ENCODE measurements at regions of chr10 and their contacts with region 1.

Region 1: GRCh38 chr10:30591249-30591670 is 38.3 kb downstream of the LYZL2 start:
- DNase-seq: peak; percentile 64
- H3K4me3 ChIP-seq: no peak overlapping the region
- H3K27ac ChIP-seq: no peak overlapping the region
- H3K4me1 ChIP-seq: peaks cover 14% of the 10 kb centered on the region
- CTCF ChIP-seq: peak; percentile 97

Region 2: GRCh38 chr10:29998142-29998808 is 593.0 kb before region 1 on chr10:
- CTCF ChIA-PET with region 1: no interaction called
- POLR2A ChIA-PET with region 1: no interaction called
- intact Hi-C with region 1: loop called (anchors 10 kb)
- DNase-seq: peak; percentile 71
- H3K4me3 ChIP-seq: no peak overlapping the region
- H3K27ac ChIP-seq: no peak overlapping the region
- H3K4me1 ChIP-seq: no peaks in the 10 kb centered on the region
- CTCF ChIP-seq: peak; percentile 99

Region 3: DNA sequence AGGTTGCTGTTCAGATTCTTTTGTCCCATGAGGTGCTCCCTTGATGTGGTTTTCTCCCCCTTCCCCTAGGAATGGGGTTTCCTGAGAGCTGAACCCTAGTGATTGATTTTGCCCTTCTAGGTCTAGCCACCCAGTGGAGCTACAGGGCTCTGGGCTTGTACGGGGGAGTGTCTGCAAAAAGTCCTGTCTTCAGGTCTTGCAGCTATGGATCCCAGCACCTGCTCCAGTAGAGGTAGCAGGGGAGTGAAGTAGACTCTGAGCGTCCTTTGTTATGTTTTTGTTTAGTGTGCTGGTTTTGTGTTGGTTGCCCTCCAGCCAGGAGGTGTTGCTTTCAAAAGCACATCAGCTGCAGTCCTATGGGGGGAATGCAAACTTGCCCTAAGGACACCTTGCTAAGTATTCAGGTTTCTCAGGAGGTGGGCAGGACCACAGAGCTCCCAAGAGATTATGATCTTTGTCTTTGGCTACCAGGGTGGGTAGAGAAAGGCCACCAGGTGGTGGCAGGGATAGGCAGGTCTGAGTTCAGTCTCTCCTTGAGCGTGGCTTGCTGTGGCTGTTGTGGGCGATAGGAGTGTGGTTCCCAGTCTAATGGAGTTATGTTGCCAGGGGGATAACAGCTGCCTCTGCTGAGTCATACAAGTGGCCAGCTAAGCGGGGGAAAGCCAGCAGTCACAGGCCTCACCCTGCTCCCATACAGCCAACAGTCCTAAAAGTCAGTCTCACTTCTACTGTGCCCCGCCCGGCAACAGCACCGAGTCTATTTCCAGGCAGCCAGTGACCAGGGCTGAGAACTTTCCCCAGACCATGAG is 439.5 kb before region 1 on chr10:
- CTCF ChIA-PET with region 1: no interaction called
- POLR2A ChIA-PET with region 1: no interaction called
- intact Hi-C with region 1: no loop called
- DNase-seq: no peak
- H3K4me3 ChIP-seq: no peak overlapping the region
- H3K27ac ChIP-seq: no peak overlapping the region
- H3K4me1 ChIP-seq: no peaks in the 10 kb centered on the region
- CTCF ChIP-seq: no peak

Region 4: DNA sequence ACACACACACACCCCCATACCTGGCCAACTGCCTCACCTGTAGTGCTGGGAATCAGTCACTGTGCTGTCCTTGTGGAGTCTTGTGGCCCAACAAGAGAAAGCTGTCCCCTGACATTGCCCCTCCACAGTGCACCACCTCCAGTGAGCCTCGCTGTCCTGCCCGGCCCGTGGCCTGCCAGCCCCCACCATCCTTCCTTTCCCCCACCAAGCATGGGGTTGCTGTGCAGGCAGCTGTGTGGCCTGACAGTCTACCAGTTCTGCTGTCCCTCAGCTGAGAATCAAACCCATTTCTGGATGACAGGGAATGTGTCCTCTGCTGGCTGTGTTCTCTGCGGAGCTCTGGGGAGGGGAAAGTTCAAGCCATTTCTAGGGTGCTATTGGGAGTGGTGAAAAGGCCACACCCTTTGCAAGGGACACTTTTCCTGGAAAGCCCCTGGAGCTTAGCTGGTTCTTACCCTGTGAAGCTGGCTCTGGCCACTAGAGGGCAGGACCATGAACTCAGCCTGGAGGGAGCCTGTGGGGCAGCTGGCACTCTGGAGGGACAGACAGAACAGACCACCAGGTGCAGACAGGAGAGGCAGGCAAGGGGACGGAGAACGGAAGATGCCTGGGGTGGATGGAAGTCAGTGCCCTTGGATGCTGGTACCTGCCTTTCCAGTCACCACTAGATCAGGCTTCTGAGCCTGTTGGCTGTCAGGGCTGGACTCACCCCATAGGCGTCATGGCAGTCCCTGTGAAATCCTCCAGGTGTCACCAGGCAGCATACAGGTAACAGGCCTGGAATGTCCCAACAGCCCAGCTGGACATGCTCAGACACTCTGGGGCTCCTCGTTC is 231.7 kb before region 1 on chr10:
- CTCF ChIA-PET with region 1: interaction called, 6 read pairs
- POLR2A ChIA-PET with region 1: no interaction called
- intact Hi-C with region 1: loop called (anchors 1 kb)
- DNase-seq: peak; percentile 71
- H3K4me3 ChIP-seq: no peak overlapping the region
- H3K27ac ChIP-seq: no peak overlapping the region
- H3K4me1 ChIP-seq: no peaks in the 10 kb centered on the region
- CTCF ChIP-seq: peak; percentile 94

Region 5: GRCh38 chr10:30392564-30392990 is 198.7 kb before region 1 on chr10:
- CTCF ChIA-PET with region 1: interaction called, 6 read pairs
- POLR2A ChIA-PET with region 1: no interaction called
- intact Hi-C with region 1: loop called (anchors 1 kb)
- DNase-seq: peak; percentile 74
- H3K4me3 ChIP-seq: no peak overlapping the region
- H3K27ac ChIP-seq: no peak overlapping the region
- H3K4me1 ChIP-seq: no peaks in the 10 kb centered on the region
- CTCF ChIP-seq: peak; percentile 93

Region 6: DNA sequence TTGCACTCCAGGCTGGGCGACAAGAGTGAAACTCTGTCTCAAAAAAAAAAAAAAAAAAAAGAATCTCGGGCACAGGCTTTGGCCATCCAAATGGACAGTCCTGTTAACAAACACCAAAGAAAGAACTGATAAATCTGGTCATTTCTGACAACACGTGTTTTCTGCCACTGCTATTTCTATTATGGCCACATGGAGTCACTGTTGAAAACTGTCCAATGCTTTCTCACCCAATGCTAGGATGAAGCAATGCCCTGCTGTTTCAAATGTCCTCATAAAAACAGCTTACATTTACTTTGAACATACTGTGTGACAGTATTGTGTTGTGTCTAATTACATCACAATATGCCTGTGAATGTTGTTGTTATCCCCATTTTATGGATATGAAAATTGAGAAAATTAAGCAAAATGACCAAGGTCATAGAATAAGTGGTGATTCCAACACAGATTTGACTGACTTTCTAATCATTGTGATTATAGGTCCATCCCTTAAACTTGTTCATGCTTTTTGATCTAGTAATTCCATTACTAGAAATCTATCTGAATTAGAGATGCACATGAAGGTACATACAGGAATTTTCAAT is 177.2 kb before region 1 on chr10:
- CTCF ChIA-PET with region 1: no interaction called
- POLR2A ChIA-PET with region 1: interaction called, 3 read pairs
- intact Hi-C with region 1: loop called (anchors 5 kb)
- DNase-seq: peak; percentile 79
- H3K4me3 ChIP-seq: no peak overlapping the region
- H3K27ac ChIP-seq: no peak overlapping the region
- H3K4me1 ChIP-seq: peaks cover 24% of the 10 kb centered on the region
- CTCF ChIP-seq: peak; percentile 90

Region 7: DNA sequence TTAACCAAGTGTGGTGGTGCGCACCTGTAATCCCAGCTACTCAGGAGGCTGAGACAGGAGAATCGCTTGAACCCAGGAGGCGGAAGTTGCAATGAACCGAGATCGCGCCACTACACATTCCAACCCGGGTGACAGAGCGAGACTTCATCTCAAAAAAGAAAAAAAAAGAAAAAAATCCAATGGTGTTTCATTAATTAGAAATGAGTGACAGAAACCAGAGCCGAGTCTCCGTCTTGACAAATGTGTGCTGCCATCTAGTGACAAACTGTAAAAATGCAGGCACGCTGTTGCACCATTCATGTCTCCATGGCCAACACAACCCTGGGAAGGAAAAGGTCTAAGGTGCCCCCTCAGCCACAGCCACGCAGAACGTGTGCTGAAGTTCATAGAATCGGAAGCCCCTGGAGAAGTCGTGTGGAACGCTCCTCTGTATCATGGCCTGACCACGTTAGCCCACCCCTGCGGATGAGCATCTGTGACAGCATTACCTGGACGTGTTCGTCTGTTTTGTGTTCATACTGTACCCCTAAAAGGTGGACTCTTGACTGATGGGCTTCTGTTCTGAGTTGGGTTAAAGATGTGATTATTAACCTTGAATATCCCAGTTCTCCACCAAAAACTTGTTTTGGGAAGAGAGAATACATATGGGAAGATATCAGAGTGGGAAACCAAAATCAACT is 56.7 kb before region 1 on chr10:
- CTCF ChIA-PET with region 1: interaction called, 4 read pairs
- POLR2A ChIA-PET with region 1: interaction called, 3 read pairs
- intact Hi-C with region 1: loop called (anchors 2 kb)
- DNase-seq: peak; percentile 87
- H3K4me3 ChIP-seq: no peak overlapping the region
- H3K27ac ChIP-seq: no peak overlapping the region
- H3K4me1 ChIP-seq: peaks cover 26% of the 10 kb centered on the region
- CTCF ChIP-seq: peak; percentile 90

Region 8: DNA sequence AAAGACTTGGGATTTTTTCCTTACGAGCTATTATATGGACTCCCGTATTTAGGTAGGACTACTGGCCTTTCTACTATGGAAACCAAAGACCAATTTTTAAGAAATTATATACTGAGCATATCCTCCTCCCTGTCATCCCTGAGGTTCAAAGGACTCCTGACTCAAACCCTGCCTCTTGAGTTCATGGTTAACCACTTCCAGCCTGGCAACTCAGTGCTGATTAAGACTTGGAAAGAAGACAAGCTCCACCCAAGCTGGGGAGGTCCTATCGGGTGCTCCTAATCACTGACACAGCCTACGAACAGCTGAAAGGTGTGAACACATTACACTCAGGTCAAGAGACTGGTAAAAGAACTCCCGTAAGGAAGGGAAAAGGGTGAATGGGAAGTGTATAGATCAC is 28.5 kb before region 1 on chr10:
- CTCF ChIA-PET with region 1: no interaction called
- POLR2A ChIA-PET with region 1: no interaction called
- intact Hi-C with region 1: no loop called
- DNase-seq: no peak
- H3K4me3 ChIP-seq: no peak overlapping the region
- H3K27ac ChIP-seq: no peak overlapping the region
- H3K4me1 ChIP-seq: no peaks in the 10 kb centered on the region
- CTCF ChIP-seq: no peak

Region 9: DNA sequence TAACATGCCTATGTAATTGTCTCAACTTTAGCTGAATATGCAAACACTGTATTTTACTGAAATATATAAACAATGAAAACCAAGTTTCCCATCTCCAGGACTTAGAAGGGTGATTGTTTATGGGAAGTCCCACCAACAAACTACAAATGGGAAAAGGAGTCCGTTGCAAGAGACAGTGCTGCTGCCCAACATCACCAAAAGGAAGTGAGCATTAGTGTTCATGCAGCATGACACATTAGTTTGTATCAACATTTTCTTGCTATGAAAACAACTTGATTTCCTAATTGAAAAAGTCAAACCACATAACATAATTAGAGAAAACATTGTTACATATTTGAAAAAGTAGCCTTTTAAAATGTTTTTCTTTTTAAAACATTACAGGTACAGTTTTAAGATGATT is 301.9 kb after region 1 on chr10:
- CTCF ChIA-PET with region 1: no interaction called
- POLR2A ChIA-PET with region 1: no interaction called
- intact Hi-C with region 1: no loop called
- DNase-seq: no peak
- H3K4me3 ChIP-seq: no peak overlapping the region
- H3K27ac ChIP-seq: no peak overlapping the region
- H3K4me1 ChIP-seq: no peaks in the 10 kb centered on the region
- CTCF ChIP-seq: no peak

Measured in OCI-LY7 (cell line).